B cell (primary cell): ENCODE measurements at regions of chrX and their contacts with region 1.

Region 1: DNA sequence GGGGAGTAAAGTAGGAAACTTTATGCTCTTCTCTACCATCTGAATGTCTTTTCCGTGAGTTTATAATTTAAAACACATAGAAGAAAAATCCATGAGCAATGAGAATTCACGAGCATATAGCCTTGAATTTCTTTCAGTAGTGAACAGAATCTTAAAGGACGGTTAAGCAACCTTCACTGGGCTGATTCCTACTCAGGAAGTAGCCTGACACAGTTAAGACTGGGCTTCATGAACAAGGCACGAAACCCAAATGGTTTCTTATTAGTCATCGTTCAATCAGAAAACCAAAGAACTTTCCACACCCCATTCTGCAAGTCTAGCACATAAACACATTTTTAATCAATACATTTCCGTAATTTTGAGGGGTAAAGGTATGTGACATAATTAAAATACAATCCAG is 95.8 kb downstream of the SH3KBP1 start:
- DNase-seq: no peak
- ATAC-seq: no peak
- H3K4me3 ChIP-seq: no peak overlapping the region
- H3K4me3 Mint-ChIP-seq: peak overlapping the region; percentile 29
- H3K27ac ChIP-seq: no peak overlapping the region
- H3K27ac Mint-ChIP-seq: peak overlapping the region; percentile 26
- H3K4me1 ChIP-seq: peaks cover 11 to 22% of the 10 kb centered on the region in 2 donors
- H3K4me1 Mint-ChIP-seq: peaks cover 46% of the 10 kb centered on the region
- H3K27me3 ChIP-seq: no peaks in the 10 kb centered on the region
- H3K27me3 Mint-ChIP-seq: no peaks in the 10 kb centered on the region
- CTCF ChIP-seq: no peak

Region 2: GRCh38 chrX:19824603-19825002 is 33.0 kb after region 1 on chrX:
- CTCF ChIA-PET with region 1: no interaction called
- POLR2A ChIA-PET with region 1: no interaction called
- intact Hi-C with region 1: loop called (anchors 5 kb)
- DNase-seq: no peak
- ATAC-seq: no peak
- H3K4me3 ChIP-seq: no peak overlapping the region
- H3K4me3 Mint-ChIP-seq: no peak overlapping the region
- H3K27ac ChIP-seq: no peak overlapping the region
- H3K27ac Mint-ChIP-seq: no peak overlapping the region
- H3K4me1 ChIP-seq: peaks cover 8 to 9% of the 10 kb centered on the region in 2 donors
- H3K4me1 Mint-ChIP-seq: peaks cover 35% of the 10 kb centered on the region
- H3K27me3 ChIP-seq: no peaks in the 10 kb centered on the region
- H3K27me3 Mint-ChIP-seq: no peaks in the 10 kb centered on the region
- CTCF ChIP-seq: no peak

Region 3: GRCh38 chrX:20300822-20301221 is 509.3 kb after region 1 on chrX:
- CTCF ChIA-PET with region 1: no interaction called
- POLR2A ChIA-PET with region 1: no interaction called
- intact Hi-C with region 1: no loop called
- DNase-seq: no peak
- ATAC-seq: no peak
- H3K4me3 ChIP-seq: no peak overlapping the region
- H3K4me3 Mint-ChIP-seq: no peak overlapping the region
- H3K27ac ChIP-seq: no peak overlapping the region
- H3K27ac Mint-ChIP-seq: no peak overlapping the region
- H3K4me1 ChIP-seq: no peaks in the 10 kb centered on the region
- H3K4me1 Mint-ChIP-seq: no peaks in the 10 kb centered on the region
- H3K27me3 ChIP-seq: no peaks in the 10 kb centered on the region
- H3K27me3 Mint-ChIP-seq: peaks cover 13% of the 10 kb centered on the region
- CTCF ChIP-seq: no peak